WTC11 (cell line): ENCODE measurements at regions of chr4 and their contacts with region 1.

Region 1: GRCh38 chr4:151489462-151490203 is 80.7 kb downstream of the FHIP1A start:
- DNase-seq: peak; percentile 72
- ATAC-seq: peak; percentile 96
- H3K4me3 Mint-ChIP-seq: no peak overlapping the region
- H3K27ac Mint-ChIP-seq: peak overlapping the region; percentile 35
- H3K4me1 Mint-ChIP-seq: peaks cover 55% of the 10 kb centered on the region
- H3K27me3 Mint-ChIP-seq: no peaks in the 10 kb centered on the region
- CTCF ChIP-seq: no peak; the same call in 1 of the 2 replicates

Region 2: GRCh38 chr4:151251603-151252304 is 237.9 kb before region 1 on chr4:
- CTCF ChIA-PET with region 1: no interaction called
- POLR2A ChIA-PET with region 1: no interaction called
- DNase-seq: no peak
- ATAC-seq: no peak
- H3K4me3 Mint-ChIP-seq: no peak overlapping the region
- H3K27ac Mint-ChIP-seq: no peak overlapping the region
- H3K4me1 Mint-ChIP-seq: peaks cover 16% of the 10 kb centered on the region
- H3K27me3 Mint-ChIP-seq: no peaks in the 10 kb centered on the region
- CTCF ChIP-seq: no peak

Region 3: GRCh38 chr4:151462554-151462953 is 27.1 kb before region 1 on chr4:
- CTCF ChIA-PET with region 1: no interaction called
- POLR2A ChIA-PET with region 1: no interaction called
- DNase-seq: no peak
- ATAC-seq: no peak
- H3K4me3 Mint-ChIP-seq: no peak overlapping the region
- H3K27ac Mint-ChIP-seq: peak overlapping the region; percentile 75
- H3K4me1 Mint-ChIP-seq: peaks cover 55% of the 10 kb centered on the region
- H3K27me3 Mint-ChIP-seq: no peaks in the 10 kb centered on the region
- CTCF ChIP-seq: no peak

Region 4: GRCh38 chr4:151527699-151528098 is 38.1 kb after region 1 on chr4:
- CTCF ChIA-PET with region 1: interaction called, 15 read pairs
- POLR2A ChIA-PET with region 1: interaction called, 4 read pairs
- DNase-seq: no peak
- ATAC-seq: no peak
- H3K4me3 Mint-ChIP-seq: no peak overlapping the region
- H3K27ac Mint-ChIP-seq: no peak overlapping the region
- H3K4me1 Mint-ChIP-seq: peaks cover 55% of the 10 kb centered on the region
- H3K27me3 Mint-ChIP-seq: no peaks in the 10 kb centered on the region
- CTCF ChIP-seq: no peak

Region 5: GRCh38 chr4:151604238-151604637 is 114.6 kb after region 1 on chr4:
- CTCF ChIA-PET with region 1: interaction called, 37 read pairs
- POLR2A ChIA-PET with region 1: no interaction called
- DNase-seq: no peak
- ATAC-seq: peak; percentile 82
- H3K4me3 Mint-ChIP-seq: no peak overlapping the region
- H3K27ac Mint-ChIP-seq: peak overlapping the region; percentile 20; the same call in 1 of the 2 replicates
- H3K4me1 Mint-ChIP-seq: peaks cover 18% of the 10 kb centered on the region
- H3K27me3 Mint-ChIP-seq: no peaks in the 10 kb centered on the region
- CTCF ChIP-seq: no peak

Region 6: DNA sequence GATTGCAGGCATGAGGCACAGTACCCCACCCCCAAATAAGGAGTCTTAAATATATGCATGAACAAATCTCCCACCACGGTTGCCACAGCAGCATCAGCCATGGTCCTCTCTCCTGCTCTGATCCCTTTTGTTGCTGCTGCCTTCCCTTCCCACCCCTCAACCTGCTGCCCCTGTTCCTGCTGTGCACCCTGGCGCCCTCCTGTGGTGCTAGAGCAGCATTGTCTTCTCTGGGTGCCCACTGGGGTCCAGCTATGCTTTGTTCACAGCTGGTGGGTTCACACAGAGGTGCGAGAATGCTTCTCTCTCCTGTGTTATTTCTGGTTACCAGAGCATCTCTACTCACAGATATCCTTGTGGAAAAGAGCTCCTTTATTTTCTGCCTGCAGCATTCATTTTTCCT is 155.0 kb after region 1 on chr4:
- CTCF ChIA-PET with region 1: interaction called, 11 read pairs
- POLR2A ChIA-PET with region 1: no interaction called
- DNase-seq: peak; percentile 69
- ATAC-seq: peak; percentile 78
- H3K4me3 Mint-ChIP-seq: no peak overlapping the region
- H3K27ac Mint-ChIP-seq: peak overlapping the region; percentile 41; the same call in 1 of the 2 replicates
- H3K4me1 Mint-ChIP-seq: peaks cover 33% of the 10 kb centered on the region
- H3K27me3 Mint-ChIP-seq: no peaks in the 10 kb centered on the region
- CTCF ChIP-seq: peak; percentile 43